Dendritic cell treated with granulocyte-macrophage colony-stimulating factor and Interleukin-4, amounts not matched to agents 40 ng/mL and 50 ng/mL, for 4 days (primary cell): ENCODE measurements at regions of chr2 and their contacts with region 1.

Region 1: DNA sequence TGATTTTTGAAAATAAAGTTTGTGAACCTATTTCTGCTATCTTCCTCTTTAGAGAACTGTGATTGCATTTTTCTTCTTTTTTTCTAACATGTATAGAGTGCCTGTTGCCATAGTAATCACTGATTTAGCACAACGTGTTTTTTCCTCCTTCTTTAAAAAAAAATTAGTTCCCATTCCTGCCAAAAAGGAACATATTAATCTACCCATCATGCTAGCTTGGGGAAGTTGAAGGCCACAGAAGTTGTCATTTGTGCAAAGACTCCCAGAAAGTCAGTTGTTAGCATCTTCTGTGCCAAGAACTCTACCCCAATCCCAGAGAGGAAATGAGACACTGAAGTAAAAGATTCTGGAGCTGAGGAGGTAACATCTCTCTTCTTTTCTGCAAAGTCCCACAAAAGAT is 57.3 kb downstream of the SLC8A1 start:
- H3K4me3 Mint-ChIP-seq: no peak overlapping the region
- H3K27ac Mint-ChIP-seq: peak overlapping the region; percentile 74
- H3K4me1 Mint-ChIP-seq: peaks cover 25% of the 10 kb centered on the region
- H3K27me3 Mint-ChIP-seq: no peaks in the 10 kb centered on the region

Region 2: GRCh38 chr2:40352041-40352702 is 42.4 kb before region 1 on chr2:
- intact Hi-C with region 1: loop called (anchors 5 kb)
- H3K4me3 Mint-ChIP-seq: no peak overlapping the region
- H3K27ac Mint-ChIP-seq: peak overlapping the region; percentile 78
- H3K4me1 Mint-ChIP-seq: peaks cover 51% of the 10 kb centered on the region
- H3K27me3 Mint-ChIP-seq: no peaks in the 10 kb centered on the region

Region 3: DNA sequence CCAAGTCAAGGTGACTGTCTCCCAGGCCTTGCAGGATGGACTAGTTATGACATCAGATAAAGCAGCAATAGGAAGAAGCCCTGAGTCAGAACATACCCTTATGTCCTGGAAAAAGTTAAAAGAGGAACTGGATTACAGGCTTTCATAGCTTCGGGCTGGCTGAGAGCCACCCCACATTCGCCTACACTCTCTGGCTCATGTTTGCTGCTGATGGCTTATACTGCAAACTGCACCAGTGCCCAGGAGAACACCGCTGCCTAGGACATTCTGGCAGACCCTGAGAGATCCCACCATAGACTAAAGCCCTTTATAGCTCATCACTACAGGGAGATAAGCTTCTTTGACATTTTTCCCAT is 37.0 kb after region 1 on chr2:
- intact Hi-C with region 1: loop called (anchors 5 kb)
- H3K4me3 Mint-ChIP-seq: no peak overlapping the region
- H3K27ac Mint-ChIP-seq: peak overlapping the region; percentile 58
- H3K4me1 Mint-ChIP-seq: peaks cover 58% of the 10 kb centered on the region
- H3K27me3 Mint-ChIP-seq: no peaks in the 10 kb centered on the region

Region 4: GRCh38 chr2:40448468-40449079 is 54.0 kb after region 1 on chr2:
- intact Hi-C with region 1: loop called (anchors 5 kb)
- H3K4me3 Mint-ChIP-seq: no peak overlapping the region
- H3K27ac Mint-ChIP-seq: no peak overlapping the region
- H3K4me1 Mint-ChIP-seq: peaks cover 74% of the 10 kb centered on the region
- H3K27me3 Mint-ChIP-seq: no peaks in the 10 kb centered on the region